ENCODE measurements at regions of chr5 and their contacts with region 1.

Region 1: DNA sequence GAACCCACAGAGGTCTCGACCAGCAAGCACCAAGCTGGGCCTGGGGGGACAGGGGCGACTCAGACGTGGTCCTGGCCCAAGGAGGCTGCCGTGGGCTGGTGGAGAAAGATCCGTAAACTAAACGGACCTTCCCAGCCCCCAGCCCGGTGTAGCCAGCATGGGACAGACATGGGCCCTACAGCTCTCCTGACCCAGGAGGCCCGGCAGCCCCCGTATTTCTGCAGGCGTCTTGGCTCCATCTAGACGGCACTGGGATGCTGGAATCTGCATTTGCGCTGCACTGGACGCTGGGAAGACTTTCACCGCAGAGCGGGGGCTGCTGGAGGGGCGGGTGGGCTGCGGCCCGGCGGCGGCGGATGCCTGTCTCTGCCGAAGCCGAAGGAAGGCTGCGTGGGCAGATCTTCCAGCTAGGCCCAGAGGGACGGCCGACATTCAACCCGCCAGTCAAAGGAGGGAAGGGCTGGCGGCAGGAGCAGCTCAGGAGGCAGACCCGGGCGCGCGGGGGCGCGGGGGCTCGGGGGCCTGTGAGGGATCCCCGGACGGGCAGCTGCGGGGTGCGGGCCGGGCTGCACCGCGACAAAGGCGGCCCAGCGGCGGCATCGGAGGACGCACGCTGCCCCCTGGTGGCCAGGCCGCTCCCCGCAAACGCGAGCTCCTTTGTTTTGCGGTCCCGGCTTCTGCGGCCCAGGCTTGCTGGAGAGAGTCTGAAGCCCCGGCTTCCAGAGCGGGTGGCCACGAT is 266.2 kb downstream of the NSG2 start:
- DNase-seq: peak; percentile 75
- ATAC-seq: peak; percentile 86 to 89

Region 2: DNA sequence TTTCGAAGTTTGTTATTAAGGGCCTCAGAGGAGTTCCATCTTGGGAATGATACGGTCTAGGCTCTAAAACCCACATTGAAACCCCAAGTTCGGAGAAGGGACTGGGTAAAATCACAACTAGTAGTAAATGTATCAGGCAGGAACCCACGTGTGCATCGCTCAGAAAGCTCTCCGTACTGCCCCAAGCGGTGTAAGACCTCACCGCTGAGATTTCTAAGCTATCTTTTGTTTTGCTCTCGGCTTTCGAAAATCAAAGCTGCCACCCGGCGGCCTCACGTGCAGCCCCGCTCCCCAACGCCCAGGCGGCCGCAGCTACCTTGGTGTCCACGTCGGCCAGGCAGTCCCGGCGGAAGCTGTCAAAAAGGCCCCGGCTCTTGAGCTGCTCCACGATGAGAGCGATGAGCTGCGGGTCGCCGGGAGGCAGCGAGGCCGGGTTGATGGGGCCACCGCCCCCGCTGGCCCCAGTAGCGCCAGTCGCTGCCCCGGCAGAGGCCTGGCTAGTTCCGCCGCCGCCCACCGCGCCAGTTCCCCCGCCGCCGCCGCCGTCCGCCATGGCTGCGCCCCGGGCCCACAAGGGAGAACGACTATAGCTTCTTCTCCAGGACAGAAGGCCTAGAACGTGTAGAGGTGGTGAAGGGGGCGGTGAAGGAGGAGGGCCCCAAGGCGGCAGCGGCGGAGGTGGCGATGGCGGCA is 695.7 kb before region 1 on chr5:
- intact Hi-C with region 1: loop called (anchors 5 kb)
- DNase-seq: peak; percentile 59
- ATAC-seq: peak; percentile 77

Region 3: GRCh38 chr5:173625696-173626504 is 685.8 kb before region 1 on chr5:
- intact Hi-C with region 1: loop called in 1 of 2 experiments (anchors 5 kb)
- DNase-seq: no peak
- ATAC-seq: peak; percentile 38 to 63

Region 4: DNA sequence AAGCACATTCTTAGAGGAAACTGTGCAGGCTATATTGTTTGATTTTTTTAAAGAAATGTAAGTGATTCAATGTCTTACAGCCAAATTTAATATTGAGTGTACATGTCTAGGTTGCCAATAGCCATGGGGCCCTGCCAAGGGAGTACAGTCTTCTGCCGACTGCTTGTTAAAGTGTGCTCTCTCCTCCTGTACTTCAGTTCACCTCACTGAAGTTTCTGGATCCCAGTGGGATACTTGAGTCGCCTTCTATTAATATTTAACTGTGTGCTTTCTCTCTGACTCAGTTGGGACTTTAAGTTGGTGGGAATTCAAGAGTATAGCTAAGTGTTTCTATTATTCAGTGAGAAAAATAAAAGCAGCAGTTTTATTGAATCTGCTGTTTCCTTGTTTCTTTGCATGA is 367.2 kb before region 1 on chr5:
- intact Hi-C with region 1: no loop called
- DNase-seq: no peak
- ATAC-seq: peak in 1 of 2 donors; percentile 17

Region 5: GRCh38 chr5:174045470-174046025 is 266.2 kb before region 1 on chr5 and contains the start of gene NSG2:
- intact Hi-C with region 1: loop called (anchors 1 to 2 kb)
- DNase-seq: peak; percentile 84
- ATAC-seq: peak; percentile 99 to 100
- total RNA-seq, gene NSG2: 0.63 TPM in 1 of 2 donors, not detected in the other

Region 6: DNA sequence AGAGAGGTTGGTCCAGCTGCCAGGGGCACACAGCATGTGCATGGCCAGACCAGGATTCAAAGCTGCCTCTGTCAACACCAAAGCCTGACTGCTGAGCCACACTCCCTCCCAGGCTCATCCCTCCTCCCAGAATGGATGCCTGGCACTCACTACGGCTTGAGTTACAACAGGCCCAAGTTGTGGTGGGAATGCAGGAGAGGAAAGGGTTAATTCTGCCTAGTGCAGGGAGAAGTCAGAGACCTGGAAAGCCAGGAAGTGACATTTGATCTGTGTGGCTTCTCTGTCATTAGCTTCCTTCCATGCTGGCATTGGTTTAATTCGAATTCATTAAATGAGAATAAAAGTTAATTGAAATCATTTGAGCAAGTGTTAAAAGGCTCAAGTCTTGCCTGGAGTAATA is 116.2 kb before region 1 on chr5:
- intact Hi-C with region 1: no loop called
- DNase-seq: no peak
- ATAC-seq: no peak